Dendritic cell treated with granulocyte-macrophage colony-stimulating factor and Interleukin-4, amounts not matched to agents 40 ng/mL and 50 ng/mL, for 4 days (primary cell): ENCODE measurements at regions of chr5 and their contacts with region 1.

Region 1: DNA sequence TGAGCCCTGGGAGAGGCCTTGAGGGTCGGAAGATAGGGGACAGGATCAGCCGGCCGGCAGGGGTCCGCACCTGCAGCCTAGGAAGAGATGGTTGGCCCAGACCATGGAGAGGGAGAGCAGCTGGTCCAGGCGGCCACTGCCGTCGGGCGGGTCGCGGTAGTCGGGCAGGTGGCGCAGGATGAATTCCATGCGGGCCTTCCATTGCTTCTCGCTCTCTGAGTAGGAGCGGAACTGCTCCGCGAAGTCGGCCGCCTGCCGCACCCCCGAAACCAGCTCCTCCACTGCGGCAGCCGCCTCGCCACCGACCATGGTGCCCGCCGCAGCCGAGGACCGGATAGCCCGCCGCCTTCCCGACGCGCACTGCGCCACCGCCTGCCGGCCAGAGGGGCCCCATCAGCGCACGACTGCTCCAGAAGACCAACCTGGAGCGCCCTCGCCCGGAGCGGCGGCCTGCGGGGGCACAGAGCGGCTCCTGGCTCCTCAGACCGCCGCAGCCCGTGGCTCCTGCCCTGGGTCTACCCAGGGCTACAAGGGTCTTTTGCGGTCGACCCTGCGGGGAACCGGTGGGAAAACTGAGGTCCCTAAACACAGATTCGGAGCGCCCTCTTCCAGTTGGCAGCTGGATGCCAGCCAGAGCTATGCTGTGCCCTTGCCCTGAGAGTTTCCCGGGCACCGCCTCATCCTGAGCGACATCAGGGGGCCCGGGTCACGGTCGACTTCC is at the start of gene CDKN2AIPNL:
- H3K4me3 Mint-ChIP-seq: peak within 1 kb of the TSS; percentile 94
- H3K27ac Mint-ChIP-seq: peak within 1 kb of the TSS; percentile 87
- H3K4me1 Mint-ChIP-seq: peaks cover 28% of the 10 kb centered on the region
- H3K27me3 Mint-ChIP-seq: no peaks in the 10 kb centered on the region

Region 2: DNA sequence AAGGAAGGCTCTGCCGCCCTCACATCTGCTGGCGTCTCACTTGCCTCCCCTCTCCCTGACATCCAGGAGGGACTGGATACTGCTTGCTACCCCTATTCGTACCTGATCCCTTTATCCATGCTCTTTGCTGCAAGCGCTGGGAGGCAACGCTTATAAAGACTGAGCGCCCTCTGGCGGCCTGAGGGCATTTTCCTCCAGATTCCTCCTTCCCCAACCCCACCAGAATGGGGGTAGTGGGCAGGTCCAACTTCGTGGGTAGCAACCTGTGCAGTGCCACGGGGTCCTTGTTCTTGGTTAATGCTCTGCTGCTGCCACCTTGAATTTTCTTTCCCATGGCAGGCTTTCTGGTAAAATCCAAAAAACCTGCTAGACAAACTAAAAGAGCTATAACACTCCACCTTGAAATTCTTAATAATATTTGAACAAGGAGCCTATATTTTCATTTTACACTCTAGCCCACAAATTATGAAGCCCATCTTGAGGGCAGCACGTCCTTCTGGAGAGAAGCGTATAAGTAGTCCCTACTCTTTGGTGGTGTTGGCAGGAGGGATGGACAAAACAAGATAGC is 166.2 kb after region 1 on chr5:
- intact Hi-C with region 1: loop called (anchors 1 kb)
- H3K4me3 Mint-ChIP-seq: no peak overlapping the region
- H3K27ac Mint-ChIP-seq: no peak overlapping the region
- H3K4me1 Mint-ChIP-seq: peaks cover 20% of the 10 kb centered on the region
- H3K27me3 Mint-ChIP-seq: no peaks in the 10 kb centered on the region

Region 3: DNA sequence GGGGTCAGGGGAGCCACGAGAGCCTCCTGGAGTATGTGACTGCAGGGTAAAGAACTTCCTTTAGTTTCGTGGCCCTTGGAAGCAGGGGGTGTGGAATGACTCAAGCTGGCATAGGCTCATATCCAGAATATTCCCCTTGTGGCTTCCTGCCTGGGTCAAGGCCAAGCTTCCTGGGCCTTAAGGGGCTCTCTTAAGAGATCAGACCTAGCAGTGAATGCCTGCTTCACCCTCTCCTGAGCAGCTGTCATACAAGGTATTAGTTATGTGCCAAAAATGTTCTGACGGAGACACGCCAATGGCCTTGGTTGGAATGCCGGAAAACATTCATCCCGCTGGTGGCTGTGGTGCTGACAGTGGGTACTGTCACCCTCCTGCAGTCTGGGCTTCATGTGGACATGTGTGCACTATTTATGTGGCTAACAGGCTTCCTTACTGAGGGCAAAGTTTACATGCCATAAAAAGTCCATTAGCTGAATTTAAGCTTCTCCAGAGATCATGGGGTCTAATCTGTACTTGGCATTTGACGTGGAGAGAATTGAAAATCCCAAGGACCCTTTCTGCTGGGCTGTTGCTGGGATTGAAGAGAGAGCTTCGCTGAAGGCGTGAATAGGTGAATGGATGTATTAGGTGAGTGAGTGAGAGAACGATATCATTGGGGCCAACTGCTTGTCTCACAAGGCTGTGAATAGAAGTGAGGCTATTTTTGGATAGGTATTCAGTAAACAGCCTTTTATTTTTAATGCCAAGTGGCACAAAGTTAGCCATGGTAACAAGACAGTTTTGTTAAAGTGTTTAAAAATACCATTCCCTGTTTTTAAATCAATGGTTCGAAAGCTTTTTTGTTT is 830.5 kb after region 1 on chr5:
- intact Hi-C with region 1: no loop called
- H3K4me3 Mint-ChIP-seq: no peak overlapping the region
- H3K27ac Mint-ChIP-seq: no peak overlapping the region
- H3K4me1 Mint-ChIP-seq: peaks cover 29% of the 10 kb centered on the region
- H3K27me3 Mint-ChIP-seq: peaks cover 7% of the 10 kb centered on the region